Gastrocnemius medialis (tissue), 4 donors: ENCODE measurements at regions of chr10 and their contacts with region 1.

Region 1: DNA sequence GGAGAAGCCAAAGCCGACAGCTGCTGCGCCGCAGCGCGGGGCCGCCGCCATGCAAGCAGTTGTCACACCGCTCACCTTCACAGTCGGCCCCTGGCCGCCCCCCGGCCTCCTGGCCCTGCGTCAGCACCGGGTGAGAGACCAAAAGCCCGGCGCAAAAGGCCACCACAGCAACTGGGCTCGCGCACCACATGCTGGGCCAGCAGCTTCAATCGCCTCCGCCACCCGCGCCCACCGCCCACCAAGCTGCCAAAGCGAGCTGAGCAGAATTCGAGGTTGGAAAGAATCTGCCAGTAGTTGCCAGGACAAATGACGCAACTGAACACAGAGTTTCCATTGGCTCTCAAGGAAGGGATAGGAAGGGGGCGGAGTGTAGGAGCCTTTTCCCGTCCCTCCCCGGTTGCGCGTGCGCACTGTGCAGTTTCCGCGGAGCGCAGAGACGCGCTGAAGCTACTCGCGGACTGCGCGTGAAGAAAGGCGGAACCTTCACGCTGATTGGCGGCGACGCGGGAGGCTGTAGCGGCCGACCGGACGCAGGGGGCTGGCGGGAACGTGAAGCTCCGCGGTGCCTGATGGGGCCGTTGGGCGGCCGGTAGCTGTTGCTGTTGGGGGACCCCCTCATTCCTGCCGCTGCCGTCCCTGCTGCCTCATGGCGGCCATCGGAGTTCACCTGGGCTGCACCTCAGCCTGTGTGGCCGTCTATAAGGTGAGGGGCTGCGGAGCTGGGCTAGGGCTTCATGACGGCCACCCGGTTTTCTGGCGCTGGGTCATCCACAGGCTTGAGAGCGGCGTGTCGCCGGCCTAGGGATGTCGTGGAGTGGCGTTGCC is at the starts of genes CDNF, HSPA14 and MSANTD7:
- DNase-seq: peak; percentile 98 to 99
- ATAC-seq: peak; percentile 98 to 99
- H3K4me3 ChIP-seq: peak within 1 kb of the TSS; percentile 92 to 98 (median 94)
- H3K27ac ChIP-seq: peak within 1 kb of the TSS; percentile 92 to 98 (median 96)
- H3K4me1 ChIP-seq: peaks cover 22 to 26% of the 10 kb centered on the region in 2 donors
- H3K27me3 ChIP-seq: no peaks in the 10 kb centered on the region
- CTCF ChIP-seq: no peak
- POLR2A ChIP-seq: peak; percentile 81 to 93
- total RNA-seq, gene CDNF: 8.6 to 18.3 (median 10.9) TPM
- total RNA-seq, gene HSPA14: 17.7 to 25.5 (median 22.1) TPM
- total RNA-seq, gene MSANTD7: 4.7 to 8.5 (median 5.8) TPM

Region 2: DNA sequence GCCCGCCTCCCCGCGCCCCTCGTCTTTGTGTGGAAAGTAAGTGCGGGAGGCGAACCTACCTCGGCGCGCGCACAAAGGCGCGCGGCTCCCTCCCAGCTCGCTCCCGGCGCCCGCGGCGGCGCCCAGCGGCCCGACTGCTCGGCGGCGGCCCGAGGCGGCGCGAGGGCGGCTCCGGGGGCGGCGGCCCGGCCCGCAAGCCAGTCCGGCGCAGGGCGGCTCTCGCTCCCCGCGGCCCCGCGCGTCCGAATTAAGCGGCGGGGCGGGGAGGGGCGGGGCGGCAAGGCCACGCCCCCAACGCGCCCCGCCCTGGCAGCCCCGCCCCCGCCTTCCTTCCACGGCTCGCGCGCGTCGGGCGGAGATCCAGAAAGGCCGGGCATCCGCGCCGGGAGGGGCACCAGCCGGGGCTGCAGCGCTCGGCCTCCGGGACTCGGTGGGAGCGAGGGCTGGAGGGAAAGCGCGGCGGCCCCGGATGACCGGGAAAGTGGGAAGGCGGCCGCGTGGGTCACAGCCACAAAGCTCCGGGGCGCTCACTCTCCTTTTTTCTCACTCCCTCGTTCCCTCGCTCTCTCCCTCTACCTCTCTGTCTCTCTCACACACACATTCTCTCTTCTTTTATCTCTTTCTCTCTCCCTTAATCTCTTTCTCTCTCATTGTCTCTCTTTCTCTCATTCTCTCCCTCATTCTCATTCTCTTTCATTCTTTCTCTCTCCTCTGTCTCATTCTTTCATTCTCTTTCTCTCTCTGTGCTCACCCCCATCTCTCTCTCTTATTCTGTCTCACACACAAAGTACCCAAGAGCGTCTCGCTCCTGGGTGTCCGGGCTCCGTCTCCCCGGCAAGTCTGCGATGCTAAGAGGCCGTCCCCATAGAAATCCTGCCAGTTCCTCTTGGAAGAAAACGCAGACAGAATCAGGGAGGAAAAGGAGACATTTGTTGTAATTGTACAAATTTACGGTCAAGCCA is 233.5 kb before region 1 on chr10:
- in situ Hi-C with region 1: no loop called
- intact Hi-C with region 1: loop called (anchors 2 kb)
- DNase-seq: peak; percentile 52 to 53
- ATAC-seq: peak; percentile 89 to 90
- H3K4me3 ChIP-seq: peak overlapping the region; percentile 56 to 79 (median 66)
- H3K27ac ChIP-seq: peak overlapping the region; percentile 30 to 58 (median 44)
- H3K4me1 ChIP-seq: peaks cover 7 to 12% of the 10 kb centered on the region in 2 donors
- H3K27me3 ChIP-seq: no peaks in the 10 kb centered on the region
- CTCF ChIP-seq: no peak
- POLR2A ChIP-seq: peak in 1 of 2 donors; percentile 66

Region 3: GRCh38 chr10:14878266-14879054 is 40.5 kb after region 1 on chr10 and contains the start of gene SUV39H2:
- in situ Hi-C with region 1: no loop called
- intact Hi-C with region 1: loop called (anchors 1 kb)
- DNase-seq: peak; percentile 89 to 93
- ATAC-seq: peak; percentile 85 to 88
- H3K4me3 ChIP-seq: peak within 1 kb of the TSS; percentile 89 to 95 (median 94)
- H3K27ac ChIP-seq: peak within 1 kb of the TSS; percentile 97 to 99 (median 99)
- H3K4me1 ChIP-seq: peaks cover 30 to 34% of the 10 kb centered on the region in 2 donors
- H3K27me3 ChIP-seq: no peaks in the 10 kb centered on the region
- CTCF ChIP-seq: peak in 2 of 5 experiments; percentile 5 to 8
- POLR2A ChIP-seq: peak; percentile 87 to 88
- total RNA-seq, gene SUV39H2: 0.71 to 7.4 (median 5.0) TPM

Region 4: DNA sequence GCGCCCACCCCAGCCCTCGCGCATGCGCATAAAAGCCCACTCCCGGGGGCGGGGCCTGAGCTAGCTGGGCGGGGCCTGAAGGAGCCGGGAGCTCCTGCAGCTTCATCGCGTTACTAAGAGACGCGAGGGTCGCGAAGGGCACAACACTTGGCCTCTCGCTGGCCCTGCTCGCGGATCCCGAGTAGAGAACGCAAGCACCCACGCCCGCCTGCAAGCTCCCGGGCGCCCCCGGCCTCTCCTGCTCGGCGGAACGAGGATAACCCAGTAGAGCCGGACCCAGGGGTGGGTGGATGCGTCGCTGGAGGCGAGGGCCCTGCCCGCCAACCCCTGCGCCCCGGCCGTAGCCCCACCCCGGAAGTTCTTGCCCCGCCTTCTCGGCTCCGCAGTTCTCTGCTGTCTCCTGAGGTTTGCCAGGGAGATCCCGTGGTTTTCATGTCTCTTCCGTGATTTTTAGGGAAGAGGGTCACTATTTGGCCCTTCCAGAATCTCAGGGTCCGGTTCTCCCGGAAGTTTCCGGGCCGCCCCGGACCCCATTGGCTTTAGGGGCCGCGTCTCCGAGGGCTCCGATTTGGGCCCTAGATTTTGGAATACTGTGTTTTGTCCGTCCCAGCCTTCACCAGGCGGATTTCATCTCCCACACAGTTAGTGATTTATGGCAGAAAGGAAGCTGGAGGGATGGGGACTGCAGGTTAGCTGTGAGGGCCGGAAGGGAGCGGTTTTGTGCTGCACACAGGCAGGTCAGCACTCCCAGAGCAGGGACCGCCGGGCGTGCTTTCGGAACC is 121.5 kb after region 1 on chr10 and contains the start of gene MEIG1:
- in situ Hi-C with region 1: loop called in 1 of 4 experiments (anchors 25 kb)
- intact Hi-C with region 1: loop called (anchors 1 kb)
- DNase-seq: peak; percentile 90 to 91
- ATAC-seq: peak; percentile 91 to 95
- H3K4me3 ChIP-seq: peak within 1 kb of the TSS; percentile 70 to 96 (median 81)
- H3K27ac ChIP-seq: peak within 1 kb of the TSS; percentile 94 to 98 (median 96)
- H3K4me1 ChIP-seq: peaks cover 4 to 6% of the 10 kb centered on the region in 2 donors
- H3K27me3 ChIP-seq: no peaks in the 10 kb centered on the region
- CTCF ChIP-seq: no peak
- POLR2A ChIP-seq: peak; percentile 42 to 52
- total RNA-seq, gene MEIG1: not detected